AG04449 (cell line): ENCODE measurements at regions of chr11 and their contacts with region 1.

Region 1: DNA sequence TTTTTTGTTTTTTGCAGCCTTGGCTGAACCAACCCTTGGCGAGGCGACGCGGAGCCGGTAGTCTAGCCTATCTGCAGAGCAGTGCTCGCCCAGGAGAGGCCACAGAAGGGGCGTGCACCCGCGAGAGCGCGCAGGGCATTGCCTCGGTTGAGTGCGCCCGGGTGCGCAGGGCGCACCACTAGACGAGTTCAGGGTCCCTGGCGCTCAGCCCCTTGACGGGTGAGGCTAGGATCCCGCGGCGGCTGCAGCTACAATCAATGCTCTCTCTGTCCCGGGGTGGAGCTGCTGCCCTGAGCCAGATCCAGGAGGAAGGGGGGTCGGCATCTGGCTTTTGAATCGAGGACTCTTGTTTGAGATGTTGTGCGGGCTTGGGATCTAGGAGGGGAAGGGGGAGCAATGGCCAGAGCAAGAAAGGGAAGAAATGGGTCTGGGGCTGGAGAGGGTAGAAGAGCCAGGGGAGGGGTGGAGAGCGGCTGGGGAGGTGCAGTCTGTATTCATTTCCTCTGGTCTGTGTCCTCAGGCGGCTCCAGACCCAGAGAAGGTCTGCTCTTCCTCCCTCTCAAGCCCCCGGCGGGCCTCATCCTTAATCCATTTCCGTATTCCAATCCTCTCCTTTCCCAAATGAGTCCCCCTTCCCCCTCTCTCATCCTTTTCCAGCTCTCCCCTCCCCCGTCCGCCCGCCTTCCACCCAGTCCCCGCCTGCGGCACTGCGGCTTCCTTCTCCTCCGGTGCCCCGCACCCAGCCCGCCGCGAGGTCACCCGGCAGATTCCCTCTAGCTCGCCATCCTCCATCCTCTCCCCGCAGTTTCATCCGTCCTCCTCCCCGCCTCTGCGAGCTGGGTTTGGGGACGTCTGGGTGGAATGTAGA is 797 bp downstream of the THY1 start:
- DNase-seq: no peak
- H3K4me3 ChIP-seq: peak overlapping the region; percentile 91
- CTCF ChIP-seq: no peak

Region 2: GRCh38 chr11:119460582-119460981 is 38.4 kb after region 1 on chr11:
- CTCF ChIA-PET with region 1: interaction called, 5 read pairs
- POLR2A ChIA-PET with region 1: interaction called, 13 read pairs
- DNase-seq: peak; percentile 88
- H3K4me3 ChIP-seq: no peak overlapping the region
- CTCF ChIP-seq: no peak

Region 3: DNA sequence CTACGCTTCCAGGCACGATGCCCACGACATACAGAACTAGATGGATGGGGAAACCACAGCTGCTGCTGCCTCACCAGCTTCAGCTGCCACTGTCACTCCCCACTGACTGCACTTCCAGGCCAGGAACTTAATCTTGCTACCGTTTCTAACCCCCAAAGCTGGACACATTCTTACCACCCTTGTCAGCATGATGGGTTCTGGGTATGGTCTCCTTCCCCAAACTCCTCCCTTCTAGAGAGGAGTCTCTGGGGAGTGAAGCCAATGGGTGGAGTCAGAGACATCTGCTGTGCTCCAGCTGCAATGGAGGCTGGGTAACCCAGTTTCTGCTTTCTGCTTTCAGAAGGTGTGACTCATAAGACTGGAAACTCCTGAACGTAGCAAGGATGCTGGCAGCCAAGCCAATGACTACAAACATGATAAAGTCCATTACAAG is 87.8 kb after region 1 on chr11:
- CTCF ChIA-PET with region 1: no interaction called
- POLR2A ChIA-PET with region 1: no interaction called
- DNase-seq: peak; percentile 54
- H3K4me3 ChIP-seq: no peak overlapping the region
- CTCF ChIP-seq: no peak